ENCODE measurements at regions of chr1 and their contacts with region 1.

Region 1: DNA sequence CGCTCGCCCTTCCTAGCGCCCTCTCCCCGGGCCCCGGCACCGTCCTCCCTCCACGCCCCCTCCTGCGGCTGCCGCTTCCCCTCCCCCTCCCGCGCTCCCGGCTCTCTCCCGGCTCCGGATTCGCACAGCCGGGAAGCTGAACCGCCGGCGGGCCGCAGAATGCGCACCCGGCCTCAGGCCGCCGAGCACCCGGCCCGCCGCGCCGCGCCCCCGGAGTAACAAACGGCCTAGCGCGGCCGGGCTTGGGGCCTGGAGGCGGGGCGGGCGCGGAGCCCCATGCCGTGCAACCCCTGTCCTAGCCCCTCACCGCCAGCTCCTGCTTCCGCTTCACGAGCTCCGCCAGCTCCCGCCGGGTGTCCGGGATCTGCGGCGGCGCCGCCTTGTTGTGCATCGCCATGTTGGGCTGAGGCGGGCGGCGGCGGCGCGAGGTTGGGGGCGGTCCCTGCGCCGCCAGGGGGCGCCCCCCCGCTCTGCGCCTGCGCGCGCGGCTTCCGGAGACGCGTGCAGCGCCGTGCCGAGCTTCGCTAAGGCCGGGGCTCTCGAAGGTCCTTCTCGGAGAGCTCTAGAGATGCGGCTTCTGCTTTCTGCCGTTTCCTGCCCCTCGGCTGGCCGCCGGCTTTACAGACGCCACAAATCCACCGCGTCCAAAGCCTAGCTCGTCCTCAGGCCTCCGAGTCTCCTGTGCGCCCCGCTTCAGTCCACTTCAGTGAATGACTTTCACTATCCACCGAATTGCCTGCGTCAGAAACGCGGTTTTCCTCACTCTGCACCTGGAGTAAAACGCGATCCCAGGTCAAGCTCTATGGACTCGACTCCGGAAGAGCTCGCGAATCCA is at the start of gene MEAF6:
- DNase-seq: peak; percentile 85
- H3K4me3 ChIP-seq: peak within 1 kb of the TSS; percentile 72 to 81 (median 80)
- H3K27ac ChIP-seq: peak within 1 kb of the TSS; percentile 87
- H3K4me1 ChIP-seq: peaks cover 15% of the 10 kb centered on the region
- H3K27me3 ChIP-seq: no peaks in the 10 kb centered on the region
- CTCF ChIP-seq: peak; percentile 53 to 91
- POLR2A ChIP-seq: peak; percentile 63
- total RNA-seq, gene MEAF6: 50.5 and 62.5 TPM in 2 replicates

Region 2: DNA sequence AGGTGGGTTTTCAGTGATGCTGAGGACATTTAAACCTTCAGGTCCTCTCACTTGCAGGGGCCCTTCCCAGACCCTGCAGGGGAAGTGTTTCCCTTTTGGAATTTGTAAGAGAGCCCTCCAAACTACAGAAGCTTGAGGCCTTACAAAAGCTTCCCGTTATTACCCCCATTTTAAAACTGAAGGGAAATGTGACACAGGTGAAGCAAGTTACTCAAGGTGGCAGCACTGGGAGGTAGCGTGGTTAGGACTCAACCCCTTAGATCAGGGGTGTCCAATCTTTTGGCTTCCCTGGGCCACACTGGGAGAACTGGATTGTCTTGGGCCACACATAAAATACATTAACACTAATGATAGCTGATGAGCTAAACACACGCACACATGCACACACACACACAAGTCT is 56.0 kb before region 1 on chr1:
- CTCF ChIA-PET with region 1: interaction called, 13 read pairs
- POLR2A ChIA-PET with region 1: no interaction called
- dilution Hi-C with region 1: no loop called
- intact Hi-C with region 1: no loop called
- DNase-seq: no peak
- H3K4me3 ChIP-seq: no peak overlapping the region
- H3K27ac ChIP-seq: no peak overlapping the region
- H3K4me1 ChIP-seq: peaks cover 4% of the 10 kb centered on the region
- H3K27me3 ChIP-seq: no peaks in the 10 kb centered on the region
- CTCF ChIP-seq: no peak
- POLR2A ChIP-seq: no peak

Region 3: GRCh38 chr1:37479255-37480124 is 35.1 kb before region 1 on chr1:
- CTCF ChIA-PET with region 1: interaction called, 9 read pairs
- POLR2A ChIA-PET with region 1: no interaction called
- dilution Hi-C with region 1: no loop called
- intact Hi-C with region 1: loop called (anchors 2 kb)
- DNase-seq: peak; percentile 76
- H3K4me3 ChIP-seq: peak overlapping the region in 2 of 3 experiments; percentile 3 to 54
- H3K27ac ChIP-seq: peak overlapping the region; percentile 82
- H3K4me1 ChIP-seq: peaks cover 54% of the 10 kb centered on the region
- H3K27me3 ChIP-seq: no peaks in the 10 kb centered on the region
- CTCF ChIP-seq: no peak
- POLR2A ChIP-seq: no peak

Region 4: GRCh38 chr1:37498872-37499617 is 15.5 kb before region 1 on chr1:
- CTCF ChIA-PET with region 1: interaction called, 16 read pairs
- POLR2A ChIA-PET with region 1: interaction called, 3 read pairs
- dilution Hi-C with region 1: no loop called
- intact Hi-C with region 1: no loop called
- DNase-seq: peak; percentile 78
- H3K4me3 ChIP-seq: no peak overlapping the region
- H3K27ac ChIP-seq: peak overlapping the region; percentile 2
- H3K4me1 ChIP-seq: peaks cover 9% of the 10 kb centered on the region
- H3K27me3 ChIP-seq: no peaks in the 10 kb centered on the region
- CTCF ChIP-seq: no peak
- POLR2A ChIP-seq: no peak

Region 5: DNA sequence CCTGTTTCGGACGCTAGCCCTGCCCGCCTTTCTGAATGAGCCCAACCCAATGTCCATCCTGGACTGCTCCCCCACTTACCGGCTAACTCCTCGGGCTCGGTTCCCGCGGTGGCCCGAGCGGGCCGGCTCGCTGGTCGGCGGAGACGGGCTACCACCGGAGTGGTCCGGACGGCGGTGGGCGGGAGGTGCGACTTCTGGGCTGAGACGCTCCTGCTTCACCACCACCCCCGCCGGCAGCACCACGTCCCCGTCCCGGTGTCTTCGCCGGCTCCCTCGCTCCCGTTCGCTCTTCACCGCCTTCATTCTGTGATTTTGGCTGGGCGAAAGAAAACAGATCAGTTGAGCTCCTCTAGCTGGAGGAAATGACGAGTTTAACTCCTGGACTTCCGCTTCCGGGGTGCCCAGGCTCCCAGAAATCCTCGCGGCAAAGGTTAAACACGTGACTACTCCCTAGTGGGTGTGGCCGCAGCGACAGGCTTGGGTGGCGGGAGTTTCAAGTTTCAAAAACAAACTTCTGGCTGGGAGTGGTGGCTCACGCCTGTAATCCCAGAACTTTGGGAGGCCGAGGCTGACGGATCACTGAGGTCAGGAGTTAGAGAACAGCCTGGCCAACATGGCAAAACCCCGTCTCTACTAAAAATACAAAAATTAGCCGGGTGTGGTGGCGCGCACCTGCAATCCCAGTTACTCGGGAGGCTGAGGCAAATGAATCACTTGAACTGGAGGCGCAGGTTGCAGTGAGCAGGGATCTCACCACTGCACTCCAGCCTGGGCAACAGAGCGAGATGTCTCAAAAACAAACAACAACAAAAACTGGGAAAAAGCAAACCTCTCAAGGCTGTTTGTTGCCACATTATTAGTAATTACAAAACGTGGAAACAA is 39.6 kb after region 1 on chr1 and contains the start of gene SNIP1:
- CTCF ChIA-PET with region 1: interaction called, 10 read pairs
- POLR2A ChIA-PET with region 1: interaction called, 3 read pairs
- dilution Hi-C with region 1: no loop called
- intact Hi-C with region 1: loop called (anchors 1 kb)
- DNase-seq: peak; percentile 93
- H3K4me3 ChIP-seq: peak within 1 kb of the TSS; percentile 88 to 94 (median 88)
- H3K27ac ChIP-seq: peak within 1 kb of the TSS; percentile 76
- H3K4me1 ChIP-seq: peaks cover 14% of the 10 kb centered on the region
- H3K27me3 ChIP-seq: no peaks in the 10 kb centered on the region
- CTCF ChIP-seq: no peak
- POLR2A ChIP-seq: peak; percentile 56
- total RNA-seq, gene SNIP1: 18.4 and 19.6 TPM in 2 replicates

Region 6: DNA sequence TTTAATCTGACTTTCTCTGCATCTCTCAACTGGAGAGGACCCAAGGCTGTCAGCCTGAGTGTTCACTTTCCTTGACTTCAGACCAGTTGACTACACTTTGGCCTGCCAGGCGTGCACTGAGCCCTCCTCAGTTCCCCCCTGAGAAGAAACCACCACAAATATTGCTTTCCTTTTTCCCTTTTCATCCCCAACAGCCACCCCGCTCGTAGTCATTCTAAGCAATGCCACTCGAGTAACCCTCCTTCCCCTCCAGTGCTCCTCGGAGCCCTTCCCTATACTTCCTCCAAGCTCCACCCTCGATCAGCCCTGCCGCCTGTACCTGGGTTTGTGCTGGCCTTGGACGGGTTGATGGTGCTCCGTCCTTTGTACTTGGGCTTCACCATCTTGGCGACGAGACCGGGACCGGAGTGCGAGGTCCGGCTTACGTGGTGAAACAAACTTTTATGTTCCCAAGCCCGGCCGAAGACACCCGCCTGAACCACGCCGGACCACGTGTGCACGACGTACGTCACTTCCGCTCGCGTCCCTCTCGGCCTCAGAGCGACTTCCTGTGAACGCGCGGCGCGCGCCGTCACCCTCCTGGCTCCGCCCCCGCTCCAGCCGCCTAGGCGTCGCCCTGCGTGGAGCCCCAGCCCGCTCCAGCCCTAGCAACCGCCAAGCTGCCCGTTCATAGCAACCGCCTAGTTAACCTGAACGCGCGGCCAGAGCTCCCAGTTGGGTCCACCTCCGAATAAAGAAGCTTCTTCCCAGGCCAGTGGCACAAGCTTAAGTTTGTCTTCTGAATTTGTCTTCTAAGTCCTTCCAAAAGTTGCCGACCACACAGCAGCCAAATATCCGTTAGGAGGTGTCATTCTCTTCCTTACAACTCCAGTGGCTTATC is 81.1 kb after region 1 on chr1 and contains the start of gene GNL2:
- CTCF ChIA-PET with region 1: no interaction called
- POLR2A ChIA-PET with region 1: no interaction called
- dilution Hi-C with region 1: no loop called
- intact Hi-C with region 1: loop called (anchors 1 kb)
- DNase-seq: peak; percentile 97
- H3K4me3 ChIP-seq: peak within 1 kb of the TSS; percentile 54 to 89 (median 75)
- H3K27ac ChIP-seq: peak within 1 kb of the TSS; percentile 76
- H3K4me1 ChIP-seq: peaks cover 17% of the 10 kb centered on the region
- H3K27me3 ChIP-seq: peaks cover 0 to 6% of the 10 kb centered on the region in 2 experiments
- CTCF ChIP-seq: no peak
- POLR2A ChIP-seq: peak; percentile 87
- total RNA-seq, gene GNL2: 55.5 and 57.1 TPM in 2 replicates

Measured in endothelial cell of umbilical vein (primary cell).